H1 (cell line): ENCODE measurements at regions of chr13 and their contacts with region 1.

Region 1: DNA sequence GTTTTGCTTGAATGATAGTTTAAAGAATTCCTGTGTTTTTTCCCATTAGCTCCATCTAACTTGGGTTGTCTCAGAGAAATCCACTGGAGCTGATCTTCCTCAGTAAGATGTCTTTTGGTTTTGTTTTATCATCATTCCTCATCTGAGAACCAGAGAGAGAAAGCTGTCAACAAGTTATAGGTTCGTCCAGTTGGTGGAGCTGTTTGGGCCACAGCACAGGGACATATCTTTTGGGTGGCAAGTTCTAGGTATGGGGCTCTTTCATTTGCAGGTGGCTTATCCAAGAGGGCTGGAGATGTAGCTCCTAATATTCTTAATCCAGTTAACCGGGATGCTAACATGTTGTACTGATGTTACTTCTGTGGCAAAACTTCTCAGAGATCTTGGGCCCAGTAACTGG is 174.2 kb downstream of the KCNRG start:
- DNase-seq: no peak
- H3K4me3 ChIP-seq: no peak overlapping the region
- H3K27ac ChIP-seq: no peak overlapping the region
- H3K4me1 ChIP-seq: peaks cover 0 to 3% (median under 1%) of the 10 kb centered on the region in 4 experiments; a peak in 2 of 7 replicates
- H3K27me3 ChIP-seq: no peaks in the 10 kb centered on the region
- CTCF ChIP-seq: peak; percentile 13 to 57 (median 25); a peak in 2 of 4 replicates
- EP300 ChIP-seq: no peak
- POLR2A ChIP-seq: no peak
- RAD21 ChIP-seq: peak; percentile 28 to 54; a peak in 3 of 4 replicates

Region 2: GRCh38 chr13:50200988-50201387 is 11.5 kb after region 1 on chr13:
- CTCF ChIA-PET with region 1: interaction called, 18 read pairs
- POLR2A ChIA-PET with region 1: interaction called, 6 read pairs
- DNase-seq: no peak
- H3K4me3 ChIP-seq: no peak overlapping the region
- H3K27ac ChIP-seq: no peak overlapping the region
- H3K4me1 ChIP-seq: no peaks in the 10 kb centered on the region
- H3K27me3 ChIP-seq: no peaks in the 10 kb centered on the region
- CTCF ChIP-seq: no peak
- EP300 ChIP-seq: no peak
- POLR2A ChIP-seq: no peak
- RAD21 ChIP-seq: no peak